ENCODE measurements at regions of chr6 and their contacts with region 1.

Region 1: GRCh38 chr6:87066449-87067333 is 28.2 kb downstream of the CGA start:
- DNase-seq: no peak
- ATAC-seq: peak; percentile 25
- H3K4me3 Mint-ChIP-seq: peak overlapping the region; percentile 54
- H3K27ac Mint-ChIP-seq: no peak overlapping the region
- H3K4me1 Mint-ChIP-seq: peaks cover 5% of the 10 kb centered on the region
- H3K27me3 Mint-ChIP-seq: no peaks in the 10 kb centered on the region
- CTCF ChIP-seq: no peak

Region 2: DNA sequence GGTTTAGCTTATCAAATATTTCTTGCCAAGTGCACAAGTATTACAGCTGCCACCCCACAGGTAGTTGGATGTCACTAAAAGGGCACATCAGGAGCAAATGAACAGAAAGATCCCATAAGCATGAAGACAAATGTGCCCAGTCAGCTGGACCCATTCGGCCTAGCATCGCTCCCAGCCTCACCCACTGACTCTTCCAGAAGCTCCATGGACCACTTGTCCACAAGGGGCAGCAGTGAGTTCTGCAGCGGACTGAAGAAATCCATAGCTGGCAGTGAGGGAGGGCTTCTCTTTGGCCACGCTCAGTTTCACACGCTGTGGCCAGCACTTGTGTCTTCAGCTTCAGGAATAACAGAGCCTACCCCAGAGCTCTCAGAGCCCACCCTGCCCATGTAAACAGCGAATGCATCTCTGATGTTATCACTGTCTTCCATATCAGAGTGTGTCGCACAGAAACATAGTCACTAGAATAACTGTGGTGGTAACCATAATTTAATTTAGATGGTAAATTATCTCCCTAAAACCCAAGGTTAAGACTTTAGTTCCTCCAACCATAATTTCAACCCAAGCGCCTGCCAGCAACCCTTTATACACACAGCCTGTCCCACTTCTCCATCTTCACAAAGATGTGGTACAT is 12.4 kb after region 1 on chr6:
- CTCF ChIA-PET with region 1: interaction called, 32 read pairs
- POLR2A ChIA-PET with region 1: no interaction called
- intact Hi-C with region 1: no loop called
- DNase-seq: peak; percentile 23
- ATAC-seq: peak; percentile 69
- H3K4me3 Mint-ChIP-seq: no peak overlapping the region
- H3K27ac Mint-ChIP-seq: no peak overlapping the region
- H3K4me1 Mint-ChIP-seq: peaks cover 12% of the 10 kb centered on the region
- H3K27me3 Mint-ChIP-seq: no peaks in the 10 kb centered on the region
- CTCF ChIP-seq: peak; percentile 70

Region 3: GRCh38 chr6:87237804-87238203 is 171.1 kb after region 1 on chr6:
- CTCF ChIA-PET with region 1: no interaction called
- POLR2A ChIA-PET with region 1: interaction called, 5 read pairs
- intact Hi-C with region 1: loop called (anchors 1 kb)
- DNase-seq: no peak
- ATAC-seq: peak; percentile 66
- H3K4me3 Mint-ChIP-seq: no peak overlapping the region
- H3K27ac Mint-ChIP-seq: no peak overlapping the region
- H3K4me1 Mint-ChIP-seq: peaks cover 3% of the 10 kb centered on the region
- H3K27me3 Mint-ChIP-seq: no peaks in the 10 kb centered on the region
- CTCF ChIP-seq: no peak

Region 4: GRCh38 chr6:87393022-87393622 is 326.4 kb after region 1 on chr6:
- CTCF ChIA-PET with region 1: no interaction called
- POLR2A ChIA-PET with region 1: no interaction called
- intact Hi-C with region 1: loop called (anchors 2 kb)
- DNase-seq: no peak
- ATAC-seq: peak; percentile 94
- H3K4me3 Mint-ChIP-seq: no peak overlapping the region
- H3K27ac Mint-ChIP-seq: no peak overlapping the region
- H3K4me1 Mint-ChIP-seq: peaks cover 5% of the 10 kb centered on the region
- H3K27me3 Mint-ChIP-seq: no peaks in the 10 kb centered on the region
- CTCF ChIP-seq: peak; percentile 53

Region 5: GRCh38 chr6:88780714-88781389 is 1714.2 kb after region 1 on chr6:
- CTCF ChIA-PET with region 1: no interaction called
- POLR2A ChIA-PET with region 1: no interaction called
- intact Hi-C with region 1: loop called (anchors 2 kb)
- DNase-seq: no peak
- ATAC-seq: peak; percentile 83
- H3K4me3 Mint-ChIP-seq: no peak overlapping the region
- H3K27ac Mint-ChIP-seq: no peak overlapping the region
- H3K4me1 Mint-ChIP-seq: peaks cover 16% of the 10 kb centered on the region
- H3K27me3 Mint-ChIP-seq: no peaks in the 10 kb centered on the region
- CTCF ChIP-seq: no peak

Region 6: DNA sequence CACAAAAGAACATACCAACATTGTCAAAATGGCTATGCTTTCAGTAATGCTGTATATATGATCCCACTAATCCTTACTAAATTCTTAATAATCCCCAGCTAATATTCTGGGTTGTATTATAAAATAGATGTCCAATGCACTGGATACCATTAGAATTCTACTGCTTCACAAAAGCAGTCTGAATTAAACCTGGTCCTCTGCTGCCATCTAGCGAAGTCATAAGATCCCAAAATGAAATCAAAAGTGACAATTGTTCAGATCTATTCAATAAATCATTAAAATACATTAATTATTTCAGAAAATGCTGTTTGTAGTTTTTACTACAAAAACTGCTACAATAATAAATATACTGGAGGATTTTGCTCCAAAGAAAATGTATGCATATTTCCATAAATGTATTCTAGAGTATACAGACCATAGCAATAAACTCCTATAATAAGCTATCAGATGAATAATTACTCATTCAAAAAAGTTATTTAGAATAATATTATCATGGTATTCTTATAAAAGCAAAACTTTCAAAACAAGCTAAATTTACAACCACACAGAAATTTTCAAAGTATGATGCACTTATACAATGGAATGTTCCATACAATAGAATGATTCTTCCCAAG is 1804.1 kb after region 1 on chr6:
- CTCF ChIA-PET with region 1: interaction called, 14 read pairs
- POLR2A ChIA-PET with region 1: no interaction called
- intact Hi-C with region 1: loop called (anchors 1 kb)
- DNase-seq: no peak
- ATAC-seq: peak; percentile 42
- H3K4me3 Mint-ChIP-seq: no peak overlapping the region
- H3K27ac Mint-ChIP-seq: no peak overlapping the region
- H3K4me1 Mint-ChIP-seq: peaks cover 10% of the 10 kb centered on the region
- H3K27me3 Mint-ChIP-seq: no peaks in the 10 kb centered on the region
- CTCF ChIP-seq: no peak

Measured in activated B cell treated with CpG ODN at 0.5 μM for 24 hours (primary cell).